GM12878 (cell line): ENCODE measurements at regions of chr17 and their contacts with region 1.

Region 1: DNA sequence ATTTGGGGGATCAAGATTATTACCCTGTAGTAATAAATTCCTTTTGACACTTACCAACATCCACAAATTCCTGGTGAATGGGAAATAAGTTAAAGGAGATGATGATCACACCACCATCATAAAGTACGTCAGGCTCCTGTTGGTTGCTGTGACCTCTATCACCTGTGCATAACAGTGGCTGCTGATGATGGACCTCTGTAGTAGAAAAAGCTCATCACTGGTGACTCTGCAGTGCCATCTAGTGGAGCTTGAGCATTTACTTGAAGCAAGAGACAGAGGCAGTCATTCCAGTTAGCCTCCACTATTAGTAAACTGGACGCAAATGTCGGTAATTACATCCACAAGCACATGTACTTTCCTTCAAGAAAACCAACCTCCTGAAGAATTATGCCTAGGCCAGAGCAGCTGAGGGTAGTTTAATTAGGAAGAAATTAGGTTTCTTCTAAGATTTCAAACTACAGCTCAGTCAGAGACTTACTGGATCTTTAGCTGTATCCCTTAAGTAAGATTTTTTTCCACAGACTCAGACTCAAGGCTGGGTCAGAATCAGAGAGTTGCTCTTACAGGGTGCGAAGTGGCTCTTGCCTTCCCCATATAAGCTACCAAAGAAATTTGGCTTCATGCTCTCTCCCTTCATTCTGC is 39.3 kb downstream of the CYB561 start:
- DNase-seq: peak; percentile 40
- ATAC-seq: peak; percentile 99
- H3K4me3 ChIP-seq: no peak overlapping the region
- H3K27ac ChIP-seq: no peak overlapping the region
- H3K4me1 ChIP-seq: no peaks in the 10 kb centered on the region
- H3K27me3 ChIP-seq: peaks cover 0 to 1% of the 10 kb centered on the region in 2 experiments; a peak in 2 of 4 replicates
- CTCF ChIP-seq: peak; percentile 82 to 89 (median 89); a peak in 5 of 6 replicates
- EP300 ChIP-seq: no peak
- POLR2A ChIP-seq: no peak
- RAD21 ChIP-seq: peak; percentile 83

Region 2: DNA sequence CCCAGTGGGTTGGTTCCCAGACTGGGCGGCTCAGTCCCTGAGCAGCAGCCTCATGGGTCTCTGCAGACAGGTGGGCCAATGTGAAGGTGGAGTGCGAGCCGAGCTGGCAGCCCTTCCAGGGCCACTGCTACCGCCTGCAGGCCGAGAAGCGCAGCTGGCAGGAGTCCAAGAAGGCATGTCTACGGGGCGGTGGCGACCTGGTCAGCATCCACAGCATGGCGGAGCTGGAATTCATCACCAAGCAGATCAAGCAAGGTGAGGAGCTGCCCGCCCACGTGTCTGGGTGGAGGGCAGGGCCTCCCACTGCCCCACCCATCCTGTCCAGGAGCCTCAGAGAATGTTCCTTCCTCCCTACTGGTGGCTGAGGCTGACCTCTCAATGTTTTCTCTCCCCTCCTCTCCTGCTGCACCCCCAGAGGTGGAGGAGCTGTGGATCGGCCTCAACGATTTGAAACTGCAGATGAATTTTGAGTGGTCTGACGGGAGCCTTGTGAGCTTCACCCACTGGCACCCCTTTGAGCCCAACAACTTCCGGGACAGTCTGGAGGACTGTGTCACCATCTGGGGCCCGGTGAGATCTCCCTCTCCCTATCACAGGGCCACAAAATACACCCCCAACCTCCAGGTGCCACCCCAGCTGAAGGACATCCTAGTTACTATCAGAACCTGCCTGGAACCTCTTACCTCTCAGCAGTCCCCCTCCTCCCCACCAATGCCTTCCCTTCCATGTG is 735.1 kb before region 1 on chr17:
- CTCF ChIA-PET with region 1: interaction called, 26 read pairs
- POLR2A ChIA-PET with region 1: no interaction called
- RAD21 ChIA-PET with region 1: no interaction called
- SMC1A ChIA-PET with region 1: interaction called, 5 read pairs
- in situ Hi-C with region 1: no loop called
- intact Hi-C with region 1: loop called (anchors 1 kb)
- DNase-seq: no peak
- ATAC-seq: no peak; the same call in 2 of the 3 replicates
- H3K4me3 ChIP-seq: no peak overlapping the region
- H3K27ac ChIP-seq: no peak overlapping the region
- H3K4me1 ChIP-seq: no peaks in the 10 kb centered on the region
- H3K27me3 ChIP-seq: no peaks in the 10 kb centered on the region; a peak in 1 of 4 replicates
- CTCF ChIP-seq: no peak
- EP300 ChIP-seq: no peak
- POLR2A ChIP-seq: no peak
- RAD21 ChIP-seq: no peak

Region 3: DNA sequence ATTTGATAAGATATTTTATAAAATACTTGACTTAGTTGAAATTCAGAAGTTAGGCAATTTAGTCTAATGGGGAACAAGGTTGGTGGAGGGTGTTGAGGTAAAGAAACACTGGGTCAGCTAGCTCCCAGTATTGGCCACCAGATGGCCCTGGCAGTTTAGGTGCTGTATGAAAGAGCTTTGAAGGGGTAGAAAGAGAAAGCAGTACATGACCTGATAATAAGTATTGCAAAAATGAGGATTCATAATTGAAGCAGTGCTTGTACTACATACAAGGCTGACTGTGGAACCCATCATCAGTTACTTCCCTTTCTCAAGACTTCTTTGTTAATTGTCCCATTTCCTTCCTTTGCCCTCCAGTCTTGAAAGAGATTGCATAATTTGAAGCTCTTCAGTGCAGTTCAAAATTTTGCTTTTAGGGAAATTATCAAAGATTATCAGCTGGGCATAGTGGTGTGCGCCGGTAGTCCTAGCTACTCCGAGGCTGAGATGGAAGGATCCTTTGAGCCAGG is 411.4 kb before region 1 on chr17:
- CTCF ChIA-PET with region 1: interaction called, 26 read pairs
- POLR2A ChIA-PET with region 1: no interaction called
- RAD21 ChIA-PET with region 1: interaction called, 10 read pairs
- SMC1A ChIA-PET with region 1: interaction called, 11 read pairs
- in situ Hi-C with region 1: no loop called
- intact Hi-C with region 1: loop called (anchors 2 kb)
- DNase-seq: no peak
- ATAC-seq: peak; percentile 75
- H3K4me3 ChIP-seq: no peak overlapping the region
- H3K27ac ChIP-seq: no peak overlapping the region
- H3K4me1 ChIP-seq: no peaks in the 10 kb centered on the region
- H3K27me3 ChIP-seq: no peaks in the 10 kb centered on the region
- CTCF ChIP-seq: peak; percentile 46 to 57 (median 49)
- EP300 ChIP-seq: no peak
- POLR2A ChIP-seq: no peak
- RAD21 ChIP-seq: peak; percentile 43

Region 4: GRCh38 chr17:63113183-63113582 is 293.6 kb before region 1 on chr17:
- CTCF ChIA-PET with region 1: interaction called, 8 read pairs
- POLR2A ChIA-PET with region 1: no interaction called
- RAD21 ChIA-PET with region 1: no interaction called
- SMC1A ChIA-PET with region 1: no interaction called
- in situ Hi-C with region 1: no loop called
- intact Hi-C with region 1: loop called (anchors 2 kb)
- DNase-seq: no peak
- ATAC-seq: 0 out of 3 replicates have a peak, but pooled peaks have one; percentile 30
- H3K4me3 ChIP-seq: no peak overlapping the region
- H3K27ac ChIP-seq: no peak overlapping the region
- H3K4me1 ChIP-seq: no peaks in the 10 kb centered on the region
- H3K27me3 ChIP-seq: no peaks in the 10 kb centered on the region
- CTCF ChIP-seq: peak in 2 of 3 experiments; percentile 11 to 21; a peak in 2 of 6 replicates
- EP300 ChIP-seq: no peak
- POLR2A ChIP-seq: no peak
- RAD21 ChIP-seq: peak; percentile 28; the same call in 1 of the 2 replicates

Region 5: DNA sequence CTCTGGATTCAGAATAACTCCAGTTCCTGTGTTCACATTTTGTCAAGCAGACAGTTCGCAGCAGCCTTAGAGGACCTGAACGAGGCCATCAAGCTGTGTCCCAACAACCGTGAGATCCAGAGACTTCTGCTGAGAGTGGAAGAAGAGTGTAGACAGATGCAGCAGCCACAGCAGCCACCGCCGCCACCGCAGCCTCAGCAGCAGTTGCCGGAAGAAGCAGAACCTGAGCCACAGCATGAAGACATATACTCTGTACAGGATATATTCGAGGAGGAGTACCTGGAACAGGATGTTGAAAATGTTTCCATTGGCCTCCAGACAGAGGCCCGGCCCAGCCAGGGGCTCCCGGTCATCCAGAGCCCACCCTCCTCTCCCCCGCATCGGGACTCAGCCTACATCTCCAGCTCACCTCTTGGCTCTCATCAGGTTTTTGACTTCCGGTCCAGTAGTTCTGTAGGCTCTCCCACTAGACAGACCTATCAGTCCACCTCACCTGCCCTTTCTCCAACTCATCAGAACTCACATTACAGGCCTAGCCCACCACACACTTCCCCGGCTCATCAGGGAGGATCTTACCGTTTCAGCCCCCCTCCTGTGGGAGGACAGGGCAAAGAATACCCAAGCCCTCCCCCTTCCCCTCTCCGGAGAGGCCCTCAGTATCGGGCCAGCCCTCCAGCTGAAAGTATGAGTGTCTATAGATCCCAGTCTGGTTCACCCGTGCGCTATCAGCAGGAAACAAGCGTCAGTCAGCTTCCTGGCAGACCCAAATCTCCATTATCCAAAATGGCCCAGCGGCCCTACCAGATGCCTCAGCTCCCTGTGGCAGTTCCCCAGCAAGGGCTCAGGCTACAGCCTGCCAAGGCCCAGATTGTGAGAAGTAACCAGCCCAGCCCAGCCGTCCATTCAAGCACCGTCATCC is 13.4 kb after region 1 on chr17:
- CTCF ChIA-PET with region 1: interaction called, 18 read pairs
- POLR2A ChIA-PET with region 1: no interaction called
- RAD21 ChIA-PET with region 1: interaction called, 3 read pairs
- SMC1A ChIA-PET with region 1: interaction called, 8 read pairs
- in situ Hi-C with region 1: no loop called
- intact Hi-C with region 1: no loop called
- DNase-seq: no peak
- ATAC-seq: no peak
- H3K4me3 ChIP-seq: no peak overlapping the region
- H3K27ac ChIP-seq: no peak overlapping the region
- H3K4me1 ChIP-seq: no peaks in the 10 kb centered on the region
- H3K27me3 ChIP-seq: peaks cover under 1 to 4% of the 10 kb centered on the region in 2 experiments; a peak in 2 of 4 replicates
- CTCF ChIP-seq: no peak
- EP300 ChIP-seq: no peak
- POLR2A ChIP-seq: no peak
- RAD21 ChIP-seq: no peak

Region 6: GRCh38 chr17:63478791-63479494 is 72.1 kb after region 1 on chr17:
- CTCF ChIA-PET with region 1: interaction called, 12 read pairs
- POLR2A ChIA-PET with region 1: no interaction called
- RAD21 ChIA-PET with region 1: interaction called, 4 read pairs
- SMC1A ChIA-PET with region 1: interaction called, 3 read pairs
- in situ Hi-C with region 1: no loop called
- intact Hi-C with region 1: no loop called
- DNase-seq: no peak
- ATAC-seq: peak; percentile 97
- H3K4me3 ChIP-seq: no peak overlapping the region
- H3K27ac ChIP-seq: no peak overlapping the region
- H3K4me1 ChIP-seq: peaks cover 5% of the 10 kb centered on the region
- H3K27me3 ChIP-seq: peaks cover 9 to 13% of the 10 kb centered on the region in 2 experiments
- CTCF ChIP-seq: peak; percentile 85 to 94 (median 86)
- EP300 ChIP-seq: no peak
- POLR2A ChIP-seq: no peak
- RAD21 ChIP-seq: peak; percentile 90